ENCODE measurements at regions of chr21 and their contacts with region 1.

Region 1: GRCh38 chr21:39125752-39126485 is 57.3 kb downstream of the PSMG1 start:
- DNase-seq: peak; percentile 70
- H3K4me3 ChIP-seq: no peak overlapping the region
- H3K27ac ChIP-seq: no peak overlapping the region
- H3K4me1 ChIP-seq: peaks cover 0 to 8% of the 10 kb centered on the region in 2 experiments; a peak in 1 of 4 replicates
- H3K27me3 ChIP-seq: no peaks in the 10 kb centered on the region
- CTCF ChIP-seq: peak; percentile 72
- EP300 ChIP-seq: no peak
- RAD21 ChIP-seq: peak; percentile 93

Region 2: DNA sequence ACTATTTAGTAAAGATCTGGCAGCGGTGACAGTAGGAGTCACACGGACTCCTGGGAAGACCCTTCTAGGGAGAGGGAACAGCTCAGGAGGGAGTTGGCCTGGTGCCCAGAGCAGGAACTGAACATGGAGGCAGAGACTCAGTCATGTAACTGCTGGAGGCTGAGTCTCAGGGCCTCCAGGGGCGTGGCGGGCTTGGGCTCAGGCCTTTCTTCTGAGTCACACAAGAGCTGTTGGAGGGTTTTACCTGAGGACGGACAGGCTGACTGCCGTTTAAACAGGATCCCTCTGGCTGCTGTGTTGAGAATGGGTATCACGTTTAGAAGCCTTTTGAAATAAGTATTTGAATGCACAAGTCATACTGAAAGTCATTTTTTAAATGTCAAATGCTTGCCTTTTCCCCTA is 327.4 kb before region 1 on chr21:
- CTCF ChIA-PET with region 1: interaction called, 13 read pairs
- POLR2A ChIA-PET with region 1: no interaction called
- DNase-seq: peak; percentile 40
- H3K4me3 ChIP-seq: no peak overlapping the region
- H3K27ac ChIP-seq: peak overlapping the region; percentile 53 to 91; a peak in 3 of 4 replicates
- H3K4me1 ChIP-seq: peaks cover 16 to 45% of the 10 kb centered on the region in 2 experiments
- H3K27me3 ChIP-seq: no peaks in the 10 kb centered on the region
- CTCF ChIP-seq: no peak
- EP300 ChIP-seq: no peak
- RAD21 ChIP-seq: no peak

Region 3: DNA sequence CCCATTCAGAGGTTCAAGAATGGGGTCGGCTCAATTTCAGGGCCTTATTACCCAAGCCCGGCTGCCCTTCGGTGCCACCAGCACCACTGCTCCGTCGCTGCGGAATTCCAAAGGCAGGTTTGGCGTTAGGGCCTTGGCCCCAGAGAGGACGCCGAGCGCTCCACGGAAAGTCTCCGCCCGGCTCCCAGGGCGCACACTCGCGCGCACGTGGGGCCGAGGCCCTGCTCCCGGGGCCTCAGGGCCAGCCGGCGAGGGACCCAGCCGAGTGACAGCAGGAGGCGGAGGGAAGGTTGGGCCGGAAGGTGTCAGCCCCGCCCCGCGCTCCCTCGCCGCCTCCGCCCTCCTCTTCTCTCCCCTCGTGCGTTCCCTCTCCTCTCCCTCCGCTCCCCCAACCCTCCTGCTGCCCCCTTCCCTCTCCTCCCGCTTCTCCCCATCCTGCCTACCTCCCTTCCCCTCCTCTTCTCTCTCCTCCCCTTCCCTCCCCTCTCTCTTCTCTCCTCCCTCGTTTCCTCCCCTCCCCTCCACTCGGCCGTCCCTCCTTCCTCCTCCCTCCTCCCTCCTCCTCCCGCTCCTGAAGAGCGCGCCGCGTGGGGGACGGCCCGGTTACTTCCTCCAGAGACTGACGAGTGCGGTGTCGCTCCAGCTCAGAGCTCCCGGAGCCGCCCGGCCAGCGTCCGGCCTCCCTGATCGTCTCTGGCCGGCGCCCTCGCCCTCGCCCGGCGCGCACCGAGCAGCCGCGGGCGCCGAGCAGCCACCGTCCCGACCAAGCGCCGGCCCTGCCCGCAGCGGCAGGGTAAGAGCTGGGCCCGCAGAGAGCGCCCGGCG is 320.4 kb before region 1 on chr21 and contains the start of gene ETS2:
- CTCF ChIA-PET with region 1: interaction called, 15 read pairs
- POLR2A ChIA-PET with region 1: interaction called, 4 read pairs
- DNase-seq: peak; percentile 91
- H3K4me3 ChIP-seq: peak within 1 kb of the TSS; percentile 68 to 86
- H3K27ac ChIP-seq: peak within 1 kb of the TSS; percentile 62 to 95
- H3K4me1 ChIP-seq: peaks cover 17 to 43% of the 10 kb centered on the region in 2 experiments
- H3K27me3 ChIP-seq: no peaks in the 10 kb centered on the region
- CTCF ChIP-seq: no peak
- EP300 ChIP-seq: no peak
- RAD21 ChIP-seq: no peak; the same call in 1 of the 2 replicates
- polyA plus RNA-seq, gene ETS2: 14.2 and 16.3 TPM in 2 replicates

Region 4: GRCh38 chr21:39251326-39251725 is 125.4 kb after region 1 on chr21:
- CTCF ChIA-PET with region 1: no interaction called
- POLR2A ChIA-PET with region 1: no interaction called
- DNase-seq: no peak
- H3K4me3 ChIP-seq: no peak overlapping the region
- H3K27ac ChIP-seq: no peak overlapping the region
- H3K4me1 ChIP-seq: peaks cover 0 to 6% of the 10 kb centered on the region in 2 experiments; a peak in 2 of 4 replicates
- H3K27me3 ChIP-seq: no peaks in the 10 kb centered on the region
- CTCF ChIP-seq: no peak
- EP300 ChIP-seq: no peak
- RAD21 ChIP-seq: no peak